Right ventricle myocardium superior (tissue), 1 donor: ENCODE measurements at regions of chr2 and their contacts with region 1.

Region 1: GRCh38 chr2:212777020-212777491 is 238.5 kb upstream of the ERBB4 start:
- DNase-seq: no peak
- ATAC-seq: no peak

Region 2: DNA sequence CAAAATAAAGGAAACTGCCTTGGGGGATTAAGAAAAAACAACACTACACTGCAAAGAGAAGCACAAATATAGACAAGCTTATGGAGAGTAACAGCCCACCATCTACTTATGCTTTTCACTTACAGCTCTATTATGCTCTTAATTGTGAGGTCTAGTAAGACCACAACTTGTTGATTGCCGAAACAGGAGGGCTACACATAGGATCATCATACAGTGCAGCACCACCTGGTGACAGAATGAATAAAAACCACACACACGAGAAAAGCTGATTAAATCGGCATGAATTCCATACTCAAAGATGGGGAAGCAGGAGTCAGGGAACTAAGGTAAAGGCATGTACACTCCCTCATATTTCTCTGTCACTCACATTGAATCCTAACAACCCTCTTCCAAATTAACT is 115.1 kb after region 1 on chr2:
- intact Hi-C with region 1: loop called (anchors 10 kb)
- DNase-seq: no peak
- ATAC-seq: no peak

Region 3: DNA sequence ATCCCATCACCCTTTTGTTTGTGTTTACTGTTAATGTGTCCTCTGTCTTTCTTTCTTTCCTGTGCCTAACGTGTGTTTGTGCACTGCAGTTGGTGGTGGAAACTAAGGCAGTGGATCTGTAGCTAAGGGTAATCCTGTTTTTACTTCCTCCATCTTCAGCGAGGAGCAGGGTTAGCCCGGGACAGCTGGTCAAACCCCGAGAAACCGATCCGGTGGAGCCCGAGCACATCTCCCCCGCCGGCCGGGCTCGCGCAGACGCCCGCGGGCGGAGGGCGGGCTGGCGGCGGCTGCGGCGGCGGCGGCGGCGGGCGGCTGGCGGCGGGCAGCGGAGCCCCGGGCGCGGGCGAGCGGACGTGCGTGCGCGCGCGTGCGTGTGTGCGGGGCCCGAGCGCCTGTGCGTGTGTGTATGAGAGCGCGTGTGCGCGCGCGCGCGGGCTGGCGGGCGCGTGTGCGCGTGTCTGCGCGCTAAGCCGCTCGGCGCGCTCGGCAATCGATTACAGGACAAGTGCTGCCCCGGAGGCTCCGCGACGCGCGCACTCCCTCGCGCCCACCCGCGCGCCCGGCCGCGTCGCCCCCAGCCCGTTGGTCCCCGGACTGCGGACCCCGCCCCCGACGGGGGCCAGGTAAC is 374.5 kb after region 1 on chr2 and contains the start of gene IKZF2:
- intact Hi-C with region 1: loop called (anchors 5 kb)
- DNase-seq: peak; percentile 91
- ATAC-seq: peak; percentile 97
- total RNA-seq, gene IKZF2: 4.3 TPM

Region 4: DNA sequence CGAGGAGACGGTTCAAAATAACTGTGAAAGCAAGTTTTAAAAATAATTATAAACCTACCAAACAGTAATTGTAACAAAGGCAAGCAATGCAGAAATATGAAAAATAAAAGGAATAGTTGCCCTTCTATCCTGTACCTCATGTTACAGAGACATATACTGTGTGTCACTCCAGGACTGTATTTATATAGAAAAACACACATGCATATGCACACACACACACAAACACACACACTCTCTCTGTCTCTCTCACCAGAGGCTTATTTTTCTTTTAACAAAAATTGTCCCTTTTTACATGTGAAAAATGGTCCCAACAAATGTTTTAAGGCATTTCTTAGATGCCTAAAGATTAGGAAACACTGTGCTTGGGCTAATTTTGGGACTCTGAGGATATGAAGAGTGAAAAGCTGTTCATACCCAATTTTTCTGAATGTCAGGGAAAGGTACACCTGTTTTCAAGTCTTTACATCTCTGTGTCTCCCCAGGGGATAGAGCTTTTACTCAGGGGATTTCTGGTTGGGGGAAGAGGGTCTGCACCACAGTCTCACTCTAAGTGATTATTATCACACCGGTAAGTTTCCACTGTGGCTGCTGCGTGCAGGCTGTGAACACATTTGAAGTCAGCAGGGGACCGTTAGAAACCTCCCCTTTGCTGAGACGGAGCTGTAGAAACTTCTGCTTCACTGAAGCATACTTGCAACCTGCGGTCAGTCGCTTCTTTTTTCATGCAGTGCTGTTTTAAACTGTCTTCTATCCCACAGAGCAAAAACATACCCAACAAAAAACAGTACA is 455.8 kb after region 1 on chr2:
- intact Hi-C with region 1: no loop called
- DNase-seq: no peak
- ATAC-seq: no peak